CD4-positive, alpha-beta memory T cell (primary cell): ENCODE measurements at regions of chr19 and their contacts with region 1.

Region 1: GRCh38 chr19:53333463-53334449 is at the start of gene ZNF845:
- DNase-seq: peak; percentile 93 to 99 (median 95)
- H3K4me3 ChIP-seq: peak within 1 kb of the TSS; percentile 90 to 99
- H3K4me3 Mint-ChIP-seq: peak within 1 kb of the TSS; percentile 89 to 98 (median 95)
- H3K27ac ChIP-seq: peak within 1 kb of the TSS; percentile 64
- H3K27ac Mint-ChIP-seq: peak within 1 kb of the TSS; percentile 89 to 97 (median 94)
- H3K4me1 ChIP-seq: peaks cover 14% of the 10 kb centered on the region
- H3K4me1 Mint-ChIP-seq: peaks cover 13 to 35% (median 21%) of the 10 kb centered on the region in 4 donors
- H3K27me3 ChIP-seq: no peaks in the 10 kb centered on the region
- H3K27me3 Mint-ChIP-seq: peaks cover 4% of the 10 kb centered on the region in 2 donors
- total RNA-seq, gene ZNF845: 18.0 to 19.4 TPM

Region 2: DNA sequence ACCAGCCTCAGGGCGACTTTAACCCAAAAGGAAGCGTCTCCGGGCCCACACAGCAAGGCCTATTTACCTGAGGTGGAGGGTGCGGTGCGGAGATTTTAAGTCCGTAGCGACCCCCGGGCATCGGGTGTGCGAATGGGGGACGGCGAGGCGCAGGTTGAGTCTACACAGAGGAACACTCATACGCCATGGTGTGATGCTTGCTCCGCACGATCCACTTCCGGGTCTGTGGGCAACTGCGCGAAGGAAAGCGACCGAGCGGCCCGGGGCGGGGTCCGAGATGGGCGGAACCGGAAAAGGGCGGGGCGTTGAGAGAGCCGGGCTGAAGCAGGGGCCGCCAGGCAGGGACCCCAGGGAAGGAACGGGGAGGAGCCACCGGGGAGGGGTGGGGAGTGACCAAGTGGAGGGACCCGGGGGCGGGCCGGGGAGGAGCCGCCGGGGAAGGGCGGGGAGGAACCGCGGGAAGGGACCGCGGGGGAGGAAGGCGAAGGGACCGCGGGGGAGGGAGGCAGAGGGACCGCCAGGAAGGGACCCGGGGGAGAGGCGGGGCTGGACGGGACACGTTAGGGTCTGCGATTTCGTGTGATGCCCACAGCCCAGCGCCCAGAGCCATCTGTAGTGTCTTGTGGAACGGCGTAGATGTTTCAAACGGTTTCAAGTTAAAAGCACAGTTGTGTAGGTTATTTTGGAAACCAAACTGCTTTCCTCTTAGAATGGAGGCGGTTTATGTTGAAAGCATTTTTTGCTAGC is 230.4 kb before region 1 on chr19 and contains the start of gene ZNF160:
- CTCF ChIA-PET with region 1: no interaction called
- POLR2A ChIA-PET with region 1: no interaction called
- intact Hi-C with region 1: loop called (anchors 1 kb)
- DNase-seq: peak; percentile 97 to 98 (median 97)
- H3K4me3 ChIP-seq: peak within 1 kb of the TSS; percentile 92 to 96
- H3K4me3 Mint-ChIP-seq: peak within 1 kb of the TSS; percentile 87 to 96 (median 95)
- H3K27ac ChIP-seq: peak within 1 kb of the TSS; percentile 84
- H3K27ac Mint-ChIP-seq: peak within 1 kb of the TSS; percentile 91 to 98 (median 95)
- H3K4me1 ChIP-seq: peaks cover 27% of the 10 kb centered on the region
- H3K4me1 Mint-ChIP-seq: peaks cover 20 to 46% (median 32%) of the 10 kb centered on the region in 4 donors
- H3K27me3 ChIP-seq: no peaks in the 10 kb centered on the region
- H3K27me3 Mint-ChIP-seq: no peaks in the 10 kb centered on the region
- total RNA-seq, gene ZNF160: 72.0 to 81.1 TPM

Region 3: GRCh38 chr19:53308339-53308811 is 25.4 kb before region 1 on chr19:
- CTCF ChIA-PET with region 1: no interaction called
- POLR2A ChIA-PET with region 1: no interaction called
- intact Hi-C with region 1: no loop called
- DNase-seq: no peak
- H3K4me3 ChIP-seq: no peak overlapping the region
- H3K4me3 Mint-ChIP-seq: no peak overlapping the region
- H3K27ac ChIP-seq: no peak overlapping the region
- H3K27ac Mint-ChIP-seq: no peak overlapping the region
- H3K4me1 ChIP-seq: no peaks in the 10 kb centered on the region
- H3K4me1 Mint-ChIP-seq: peaks cover 0 to 3% (median under 1%) of the 10 kb centered on the region in 4 donors
- H3K27me3 ChIP-seq: no peaks in the 10 kb centered on the region
- H3K27me3 Mint-ChIP-seq: peaks cover 12 to 20% of the 10 kb centered on the region in 2 donors

Region 4: DNA sequence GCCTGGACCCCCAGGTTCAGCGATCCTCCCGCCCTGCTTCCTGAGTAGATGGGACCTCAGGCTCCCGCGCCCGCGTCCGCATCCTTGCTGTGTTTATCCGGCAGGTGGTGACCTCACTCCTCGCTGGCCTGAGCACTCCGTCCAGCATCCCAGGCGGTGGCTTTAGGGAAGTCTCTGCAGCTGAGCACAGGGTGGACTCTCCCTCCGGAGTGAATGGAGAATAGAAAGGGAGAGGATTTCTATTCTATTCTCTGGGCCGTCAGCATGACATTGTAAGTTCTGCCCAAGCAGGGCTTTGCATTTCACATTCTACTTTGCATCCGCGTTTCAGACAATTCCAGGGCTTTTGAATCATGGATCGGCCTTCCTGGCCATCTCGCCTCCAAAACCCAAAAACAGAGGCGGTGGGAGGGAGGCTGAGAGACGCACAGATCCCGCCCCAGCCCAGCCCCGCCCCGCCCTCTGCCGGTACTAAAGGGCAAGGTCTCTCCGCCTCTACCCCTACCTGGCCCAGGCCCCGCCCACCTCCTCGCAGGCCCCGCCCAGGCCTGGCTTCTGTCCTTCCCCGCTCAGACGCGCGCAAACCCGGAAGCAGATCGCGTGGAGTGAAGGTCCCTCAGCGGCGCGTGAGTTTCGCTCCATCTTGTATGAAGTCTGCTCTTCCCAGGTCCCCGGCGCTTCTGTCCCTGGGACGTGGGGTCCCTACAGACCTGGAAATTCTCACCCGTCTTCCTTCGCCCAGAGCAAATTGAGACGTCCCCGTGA is 31.6 kb after region 1 on chr19 and contains the start of gene ZNF525:
- CTCF ChIA-PET with region 1: no interaction called
- POLR2A ChIA-PET with region 1: no interaction called
- intact Hi-C with region 1: loop called (anchors 1 kb)
- DNase-seq: peak; percentile 93 to 97 (median 96)
- H3K4me3 ChIP-seq: peak within 1 kb of the TSS; percentile 57 to 87
- H3K4me3 Mint-ChIP-seq: peak within 1 kb of the TSS; percentile 95 to 99 (median 96)
- H3K27ac ChIP-seq: peak within 1 kb of the TSS; percentile 70
- H3K27ac Mint-ChIP-seq: peak within 1 kb of the TSS; percentile 90 to 98 (median 97)
- H3K4me1 ChIP-seq: peaks cover 6% of the 10 kb centered on the region
- H3K4me1 Mint-ChIP-seq: peaks cover 15 to 38% (median 21%) of the 10 kb centered on the region in 4 donors
- H3K27me3 ChIP-seq: no peaks in the 10 kb centered on the region
- H3K27me3 Mint-ChIP-seq: no peaks in the 10 kb centered on the region
- total RNA-seq, gene ZNF525: 36.5 to 36.6 TPM

Region 5: DNA sequence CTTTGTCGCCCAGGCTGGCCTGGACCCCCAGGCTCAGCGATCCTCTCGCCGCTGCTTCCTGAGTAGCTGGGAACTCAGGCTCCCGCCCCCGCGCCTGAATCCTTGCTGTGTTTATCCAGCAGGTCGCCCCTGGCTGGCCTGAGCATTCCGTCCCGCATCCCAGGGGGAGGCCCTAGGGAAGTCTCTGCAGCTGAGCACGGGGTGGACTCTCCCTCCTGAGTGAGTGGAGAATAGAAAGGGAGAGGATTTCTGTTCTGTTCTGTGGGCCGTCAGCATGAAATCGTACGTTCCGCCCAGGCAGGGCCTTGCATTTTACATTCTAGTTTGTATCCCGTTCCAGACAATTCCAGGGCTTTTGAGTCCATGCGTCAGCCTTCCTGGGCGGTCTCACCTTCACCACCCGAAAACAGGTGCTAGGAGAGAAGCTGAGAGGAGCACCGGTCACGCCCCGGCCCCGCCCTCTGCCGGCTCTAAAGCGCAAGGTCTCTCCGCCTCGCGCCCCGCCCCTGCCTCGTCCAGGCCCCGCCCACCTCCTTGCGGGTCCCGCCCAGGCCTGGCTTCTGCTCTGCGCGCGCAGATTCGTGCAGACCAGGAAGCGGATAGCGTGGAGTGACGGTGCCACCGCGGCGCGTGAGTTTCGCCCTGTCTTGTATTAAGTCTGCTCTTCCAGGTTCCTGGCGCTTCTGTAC is 97.8 kb after region 1 on chr19 and contains the start of gene ZNF761:
- CTCF ChIA-PET with region 1: no interaction called
- POLR2A ChIA-PET with region 1: no interaction called
- intact Hi-C with region 1: loop called (anchors 1 kb)
- DNase-seq: peak; percentile 95 to 99 (median 97)
- H3K4me3 ChIP-seq: peak within 1 kb of the TSS; percentile 77 to 80
- H3K4me3 Mint-ChIP-seq: peak within 1 kb of the TSS; percentile 97 to 100 (median 98)
- H3K27ac ChIP-seq: peak within 1 kb of the TSS; percentile 68
- H3K27ac Mint-ChIP-seq: peak within 1 kb of the TSS; percentile 92 to 99 (median 97)
- H3K4me1 ChIP-seq: peaks cover 15% of the 10 kb centered on the region
- H3K4me1 Mint-ChIP-seq: peaks cover 17 to 45% (median 30%) of the 10 kb centered on the region in 4 donors
- H3K27me3 ChIP-seq: no peaks in the 10 kb centered on the region
- H3K27me3 Mint-ChIP-seq: no peaks in the 10 kb centered on the region
- total RNA-seq, gene ZNF761: 18.3 to 20.2 TPM

Region 6: GRCh38 chr19:53520550-53521372 is 187.0 kb after region 1 on chr19:
- CTCF ChIA-PET with region 1: no interaction called
- POLR2A ChIA-PET with region 1: interaction called, 3 read pairs
- intact Hi-C with region 1: loop called (anchors 10 kb)
- DNase-seq: peak; percentile 84 to 93 (median 91)
- H3K4me3 ChIP-seq: peak overlapping the region; percentile 53 to 79
- H3K4me3 Mint-ChIP-seq: peak overlapping the region; percentile 90 to 100 (median 98)
- H3K27ac ChIP-seq: peak overlapping the region; percentile 58
- H3K27ac Mint-ChIP-seq: peak overlapping the region; percentile 90 to 98 (median 93)
- H3K4me1 ChIP-seq: peaks cover 12% of the 10 kb centered on the region
- H3K4me1 Mint-ChIP-seq: peaks cover 15 to 21% (median 16%) of the 10 kb centered on the region in 4 donors
- H3K27me3 ChIP-seq: no peaks in the 10 kb centered on the region
- H3K27me3 Mint-ChIP-seq: no peaks in the 10 kb centered on the region